AG04449 (cell line): ENCODE measurements at regions of chr15 and their contacts with region 1.

Region 1: GRCh38 chr15:34209421-34210282 is at the start of gene KATNBL1:
- DNase-seq: peak; percentile 38
- H3K4me3 ChIP-seq: peak within 1 kb of the TSS; percentile 79
- CTCF ChIP-seq: peak; percentile 95

Region 2: DNA sequence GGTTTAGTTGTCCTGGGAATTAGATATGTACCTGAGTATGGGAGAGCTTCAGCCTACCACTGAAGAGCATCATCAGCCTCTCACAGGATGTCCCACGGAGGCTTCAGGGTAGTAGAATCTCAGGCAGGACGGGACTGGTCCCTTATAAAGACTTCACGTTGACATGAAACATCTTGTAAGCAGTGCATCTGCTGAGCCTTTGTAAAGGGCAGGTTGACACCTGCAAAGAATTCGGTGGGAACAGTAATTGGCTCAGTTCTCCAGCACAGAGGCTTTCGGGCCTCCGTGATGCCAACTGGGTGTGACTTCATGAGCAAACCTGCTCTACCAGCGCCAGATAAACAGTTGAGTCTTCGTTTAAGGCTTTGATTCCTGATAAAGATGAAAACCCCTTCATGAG is 143.7 kb before region 1 on chr15:
- CTCF ChIA-PET with region 1: interaction called, 101 read pairs
- POLR2A ChIA-PET with region 1: no interaction called
- DNase-seq: no peak
- H3K4me3 ChIP-seq: no peak overlapping the region
- CTCF ChIP-seq: no peak

Region 3: GRCh38 chr15:34109797-34110663 is 99.6 kb before region 1 on chr15:
- CTCF ChIA-PET with region 1: interaction called, 324 read pairs
- POLR2A ChIA-PET with region 1: interaction called, 6 read pairs
- DNase-seq: no peak
- H3K4me3 ChIP-seq: no peak overlapping the region
- CTCF ChIP-seq: peak; percentile 59

Region 4: DNA sequence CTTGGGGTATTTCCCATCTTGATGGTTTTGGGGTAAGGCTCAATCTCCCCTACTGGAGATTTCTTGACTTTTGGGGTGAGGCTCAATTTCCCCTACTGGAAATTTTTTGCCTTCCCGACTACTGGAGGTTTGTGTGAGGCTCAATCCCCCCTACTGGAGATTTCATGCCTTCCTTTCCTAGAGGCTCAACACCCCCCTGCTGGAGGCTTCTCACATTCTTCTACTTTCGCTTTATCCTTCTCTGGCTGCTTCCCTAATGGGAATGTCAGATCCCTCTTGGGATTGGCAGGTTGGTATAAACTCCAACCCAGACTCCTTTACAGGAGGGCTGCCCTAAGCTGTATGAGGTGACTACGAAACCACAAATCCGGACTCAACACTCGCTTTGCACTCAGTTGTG is 48.9 kb before region 1 on chr15:
- CTCF ChIA-PET with region 1: interaction called, 10 read pairs
- POLR2A ChIA-PET with region 1: interaction called, 3 read pairs
- DNase-seq: no peak
- H3K4me3 ChIP-seq: no peak overlapping the region
- CTCF ChIP-seq: no peak

Region 5: GRCh38 chr15:34367101-34368081 is 157.7 kb after region 1 on chr15 and contains the start of gene LPCAT4:
- CTCF ChIA-PET with region 1: interaction called, 10 read pairs
- POLR2A ChIA-PET with region 1: interaction called, 3 read pairs
- DNase-seq: peak; percentile 34
- H3K4me3 ChIP-seq: peak within 1 kb of the TSS; percentile 89
- CTCF ChIP-seq: peak; percentile 99

Region 6: GRCh38 chr15:34693053-34693744 is 483.5 kb after region 1 on chr15:
- CTCF ChIA-PET with region 1: no interaction called
- POLR2A ChIA-PET with region 1: no interaction called
- DNase-seq: no peak
- H3K4me3 ChIP-seq: no peak overlapping the region
- CTCF ChIP-seq: no peak